CD8-positive, alpha-beta T cell (primary cell): ENCODE measurements at regions of chr6 and their contacts with region 1.

Region 1: GRCh38 chr6:127516666-127517273 is 2.4 kb downstream of the MTCL3 start:
- DNase-seq: peak in 6 of 9 experiments; percentile 23 to 69 (median 40)
- ATAC-seq: peak; percentile 28
- H3K4me3 ChIP-seq: peak overlapping the region; percentile 64 to 65
- H3K4me3 Mint-ChIP-seq: peak overlapping the region; percentile 86
- H3K27ac ChIP-seq: no peak overlapping the region
- H3K27ac Mint-ChIP-seq: peak overlapping the region; percentile 24
- H3K4me1 ChIP-seq: peaks cover 30% of the 10 kb centered on the region
- H3K4me1 Mint-ChIP-seq: peaks cover 30% of the 10 kb centered on the region
- H3K27me3 ChIP-seq: peaks cover 12 to 27% of the 10 kb centered on the region in 2 experiments
- H3K27me3 Mint-ChIP-seq: peaks cover 36% of the 10 kb centered on the region
- CTCF ChIP-seq: peak; percentile 74

Region 2: DNA sequence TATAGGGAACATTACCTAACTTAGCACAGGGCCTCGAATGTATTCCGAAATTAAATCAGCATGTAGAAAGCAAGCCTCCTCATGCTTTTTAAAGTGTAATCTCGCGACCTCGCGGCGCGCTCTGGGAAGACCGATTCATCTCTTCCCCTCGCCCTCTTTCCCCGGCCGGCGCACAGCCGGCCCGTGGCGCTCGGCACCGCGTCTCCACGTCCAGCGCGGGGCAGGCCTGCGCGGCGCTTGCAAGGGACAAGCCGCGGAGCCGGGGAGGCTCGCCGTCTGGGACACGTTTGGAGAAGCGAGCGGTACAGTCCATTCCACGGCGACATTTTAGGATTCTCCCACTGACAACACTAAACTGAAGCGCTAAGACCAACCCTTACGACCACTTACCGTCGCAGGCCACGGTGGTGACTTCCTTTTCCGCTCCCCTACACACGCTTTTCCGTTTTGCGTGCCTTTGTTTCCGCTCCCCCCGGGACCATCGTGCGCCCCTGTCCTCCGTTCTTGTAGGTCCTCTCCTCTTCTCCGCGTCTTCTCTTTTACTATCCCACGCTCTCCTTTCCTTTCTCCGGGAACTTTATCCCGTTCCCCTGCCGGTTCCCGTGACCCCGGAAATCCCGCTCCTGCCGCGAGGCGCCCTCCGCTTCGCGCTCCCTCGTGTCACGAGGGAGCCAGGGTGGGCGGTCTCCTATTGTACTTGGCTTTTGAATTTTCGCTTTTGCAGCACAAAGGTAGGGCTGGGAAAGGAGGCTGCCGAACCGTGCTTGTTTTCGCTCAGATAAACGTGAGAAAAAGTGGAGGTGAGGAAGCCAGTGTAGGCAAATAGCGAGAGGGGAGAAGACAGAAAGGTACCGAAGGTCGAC is 173.6 kb before region 1 on chr6 and contains the start of gene ECHDC1:
- CTCF ChIA-PET with region 1: interaction called, 4 read pairs
- POLR2A ChIA-PET with region 1: no interaction called
- intact Hi-C with region 1: loop called in 1 of 2 experiments (anchors 5 kb)
- DNase-seq: peak; percentile 50 to 85 (median 74)
- ATAC-seq: peak; percentile 85
- H3K4me3 ChIP-seq: peak within 1 kb of the TSS; percentile 65 to 96
- H3K4me3 Mint-ChIP-seq: no peak within 1 kb of the TSS
- H3K27ac ChIP-seq: peak within 1 kb of the TSS; percentile 88 to 93
- H3K27ac Mint-ChIP-seq: no peak within 1 kb of the TSS
- H3K4me1 ChIP-seq: peaks cover 41% of the 10 kb centered on the region
- H3K4me1 Mint-ChIP-seq: peaks cover 14% of the 10 kb centered on the region
- H3K27me3 ChIP-seq: no peaks in the 10 kb centered on the region
- H3K27me3 Mint-ChIP-seq: no peaks in the 10 kb centered on the region
- CTCF ChIP-seq: no peak
- total RNA-seq, gene ECHDC1: 9.3 to 10.0 TPM

Region 3: DNA sequence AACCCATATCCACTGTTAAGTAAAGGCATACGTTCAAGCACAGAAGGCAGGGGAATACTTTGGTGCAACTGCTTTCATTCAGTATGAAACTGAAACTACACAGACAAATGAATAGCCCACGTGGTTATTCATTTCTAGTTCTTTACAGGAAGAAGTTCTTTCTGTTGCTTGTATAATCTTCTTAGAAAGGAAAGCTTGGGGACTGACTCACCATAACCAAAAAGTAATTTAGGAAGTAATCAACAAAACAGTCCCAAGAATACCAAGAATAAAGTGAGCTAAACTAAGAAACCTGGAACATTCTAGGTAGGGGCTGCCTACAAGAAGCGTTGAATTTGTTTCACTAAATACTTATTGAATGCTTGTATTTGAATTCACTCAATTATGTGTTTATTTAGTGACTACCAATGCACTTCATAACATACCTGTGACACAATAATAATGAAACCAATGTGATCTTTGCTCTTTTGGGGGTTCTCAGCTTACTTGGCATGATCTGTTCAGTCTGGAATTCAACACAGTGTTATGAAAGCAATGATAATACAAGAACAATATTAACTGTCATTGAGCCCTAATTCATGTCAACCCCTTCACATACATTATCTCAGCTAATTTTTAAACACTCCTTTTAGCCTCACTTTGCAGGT is 32.4 kb before region 1 on chr6:
- CTCF ChIA-PET with region 1: interaction called, 4 read pairs
- POLR2A ChIA-PET with region 1: no interaction called
- intact Hi-C with region 1: loop called in 1 of 2 experiments (anchors 2 kb)
- DNase-seq: peak in 2 of 9 experiments; percentile 34 to 51
- ATAC-seq: peak; percentile 81
- H3K4me3 ChIP-seq: peak overlapping the region; percentile 23 to 25
- H3K4me3 Mint-ChIP-seq: peak overlapping the region; percentile 80
- H3K27ac ChIP-seq: peak overlapping the region in 1 of 2 experiments; percentile 53
- H3K27ac Mint-ChIP-seq: peak overlapping the region; percentile 77
- H3K4me1 ChIP-seq: peaks cover 14% of the 10 kb centered on the region
- H3K4me1 Mint-ChIP-seq: peaks cover 18% of the 10 kb centered on the region
- H3K27me3 ChIP-seq: no peaks in the 10 kb centered on the region
- H3K27me3 Mint-ChIP-seq: no peaks in the 10 kb centered on the region
- CTCF ChIP-seq: no peak